Gastrocnemius medialis (tissue), 4 donors: ENCODE measurements at regions of chr6 and their contacts with region 1.

Region 1: GRCh38 chr6:79078075-79079025 is at the start of gene PHIP:
- DNase-seq: peak; percentile 89 to 91
- ATAC-seq: peak; percentile 78 to 82
- H3K4me3 ChIP-seq: peak within 1 kb of the TSS; percentile 86 to 98 (median 92)
- H3K27ac ChIP-seq: peak within 1 kb of the TSS; percentile 99
- H3K4me1 ChIP-seq: peaks cover 40 to 46% of the 10 kb centered on the region in 2 donors
- H3K27me3 ChIP-seq: no peaks in the 10 kb centered on the region
- CTCF ChIP-seq: peak in 1 of 5 experiments; percentile 33
- POLR2A ChIP-seq: peak; percentile 69 to 75
- total RNA-seq, gene PHIP: 10.9 to 25.1 (median 16.6) TPM

Region 2: DNA sequence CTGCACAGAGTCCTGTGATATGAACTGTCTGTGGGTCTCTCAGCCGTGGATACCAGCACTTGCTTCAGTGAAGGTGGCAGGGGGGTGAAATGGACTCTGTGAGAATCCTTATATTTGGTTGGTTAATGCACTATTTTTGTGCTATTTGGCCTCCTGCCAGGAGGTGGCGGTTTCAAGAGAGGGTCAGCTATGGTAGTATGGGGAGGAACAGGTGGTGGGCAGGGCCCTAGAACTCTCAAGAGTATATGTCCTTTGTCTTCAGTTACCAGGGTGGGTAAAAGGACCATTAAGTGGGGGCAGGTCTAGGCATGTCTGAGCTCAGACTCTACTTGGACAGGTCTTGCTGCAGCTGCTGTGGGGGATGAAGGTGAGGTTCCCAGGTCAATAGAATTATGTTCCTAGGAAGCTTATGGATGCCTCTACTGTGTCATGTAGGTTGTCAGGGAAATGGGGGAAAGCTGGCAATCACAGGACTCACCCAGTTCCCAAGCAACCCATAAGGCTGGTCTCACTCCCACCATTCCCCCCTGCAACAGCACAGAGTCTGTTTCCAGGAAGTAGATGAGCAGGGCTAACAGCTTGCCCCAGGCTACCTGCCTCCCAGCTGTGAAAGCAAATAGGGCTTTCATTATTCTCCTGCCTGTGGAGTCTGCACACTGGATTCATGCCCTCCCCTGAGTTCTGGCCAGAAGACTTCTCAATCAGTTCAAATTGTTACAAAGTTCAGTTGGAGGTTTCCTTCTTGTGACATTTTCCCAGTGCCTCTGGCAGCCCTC is 56.5 kb after region 1 on chr6:
- in situ Hi-C with region 1: no loop called
- intact Hi-C with region 1: no loop called
- DNase-seq: no peak
- ATAC-seq: no peak
- H3K4me3 ChIP-seq: no peak overlapping the region
- H3K27ac ChIP-seq: no peak overlapping the region
- H3K4me1 ChIP-seq: no peaks in the 10 kb centered on the region
- H3K27me3 ChIP-seq: no peaks in the 10 kb centered on the region
- CTCF ChIP-seq: no peak
- POLR2A ChIP-seq: no peak

Region 3: DNA sequence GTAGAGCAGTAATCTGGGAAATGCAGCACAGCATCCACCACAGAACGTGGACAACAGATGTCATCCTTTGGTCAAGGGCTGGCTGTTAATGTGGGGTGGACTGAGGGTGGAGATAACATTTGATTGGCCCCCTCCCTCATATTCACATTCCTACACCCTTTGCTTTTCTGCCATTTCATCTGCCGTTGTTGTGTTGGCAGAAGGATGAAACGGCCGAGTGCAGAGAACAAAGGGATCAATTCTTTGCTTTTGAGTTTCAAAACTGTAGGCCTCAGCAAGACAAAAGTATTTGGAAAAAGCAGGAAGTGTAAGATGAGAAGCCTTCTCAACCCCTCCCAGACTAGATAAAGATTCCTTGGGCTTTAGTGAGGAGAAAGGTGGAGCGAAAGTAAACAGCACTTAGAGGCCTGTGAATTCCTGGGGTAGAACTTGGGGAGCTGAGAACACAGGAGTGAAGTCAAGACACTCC is 74.0 kb after region 1 on chr6:
- in situ Hi-C with region 1: no loop called
- intact Hi-C with region 1: loop called (anchors 5 kb)
- DNase-seq: no peak
- ATAC-seq: no peak
- H3K4me3 ChIP-seq: no peak overlapping the region
- H3K27ac ChIP-seq: no peak overlapping the region
- H3K4me1 ChIP-seq: peaks cover 3 to 7% of the 10 kb centered on the region in 2 donors
- H3K27me3 ChIP-seq: no peaks in the 10 kb centered on the region
- CTCF ChIP-seq: no peak
- POLR2A ChIP-seq: no peak

Region 4: GRCh38 chr6:79225716-79226599 is 147.6 kb after region 1 on chr6:
- in situ Hi-C with region 1: loop called in 3 of 4 experiments (anchors 10 to 25 kb)
- intact Hi-C with region 1: no loop called
- DNase-seq: no peak
- ATAC-seq: no peak
- H3K4me3 ChIP-seq: no peak overlapping the region
- H3K27ac ChIP-seq: no peak overlapping the region
- H3K4me1 ChIP-seq: peaks cover 16 to 23% of the 10 kb centered on the region in 2 donors
- H3K27me3 ChIP-seq: no peaks in the 10 kb centered on the region
- CTCF ChIP-seq: no peak
- POLR2A ChIP-seq: no peak

Region 5: DNA sequence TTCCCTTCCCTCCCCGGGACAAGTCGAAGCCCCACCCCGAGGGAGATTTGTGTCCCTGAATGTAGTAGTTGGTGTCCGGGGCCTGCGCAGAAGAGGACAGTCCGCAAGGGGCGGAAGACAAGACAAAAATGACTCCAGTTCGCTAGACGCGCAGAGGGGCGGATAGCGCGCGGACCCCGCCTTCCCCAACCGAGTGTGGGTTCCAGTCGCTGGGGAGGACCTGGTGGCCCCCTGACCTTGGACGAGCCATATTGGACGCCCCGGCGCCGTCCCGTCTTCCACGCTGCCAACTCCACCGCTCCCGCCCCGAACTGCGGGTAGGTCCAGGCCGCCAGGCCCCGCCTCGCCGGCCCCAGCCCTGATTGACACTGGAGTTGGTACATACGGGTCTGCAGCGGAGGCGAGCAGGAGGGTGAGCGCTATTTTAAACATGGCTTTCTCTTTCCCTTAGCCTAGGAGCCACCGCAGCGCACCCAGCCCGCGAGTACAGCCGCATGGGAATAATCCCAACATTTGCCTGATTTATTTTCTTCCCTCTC is 155.3 kb after region 1 on chr6:
- in situ Hi-C with region 1: loop called in 3 of 4 experiments (anchors 10 to 25 kb)
- intact Hi-C with region 1: loop called (anchors 1 kb)
- DNase-seq: peak; percentile 81 to 92
- ATAC-seq: peak; percentile 87 to 90
- H3K4me3 ChIP-seq: peak overlapping the region; percentile 72 to 91 (median 79)
- H3K27ac ChIP-seq: peak overlapping the region; percentile 91 to 96 (median 92)
- H3K4me1 ChIP-seq: peaks cover 13 to 21% of the 10 kb centered on the region in 2 donors
- H3K27me3 ChIP-seq: no peaks in the 10 kb centered on the region
- CTCF ChIP-seq: peak; percentile 31 to 66 (median 53)
- POLR2A ChIP-seq: peak; percentile 71 to 73

Region 6: DNA sequence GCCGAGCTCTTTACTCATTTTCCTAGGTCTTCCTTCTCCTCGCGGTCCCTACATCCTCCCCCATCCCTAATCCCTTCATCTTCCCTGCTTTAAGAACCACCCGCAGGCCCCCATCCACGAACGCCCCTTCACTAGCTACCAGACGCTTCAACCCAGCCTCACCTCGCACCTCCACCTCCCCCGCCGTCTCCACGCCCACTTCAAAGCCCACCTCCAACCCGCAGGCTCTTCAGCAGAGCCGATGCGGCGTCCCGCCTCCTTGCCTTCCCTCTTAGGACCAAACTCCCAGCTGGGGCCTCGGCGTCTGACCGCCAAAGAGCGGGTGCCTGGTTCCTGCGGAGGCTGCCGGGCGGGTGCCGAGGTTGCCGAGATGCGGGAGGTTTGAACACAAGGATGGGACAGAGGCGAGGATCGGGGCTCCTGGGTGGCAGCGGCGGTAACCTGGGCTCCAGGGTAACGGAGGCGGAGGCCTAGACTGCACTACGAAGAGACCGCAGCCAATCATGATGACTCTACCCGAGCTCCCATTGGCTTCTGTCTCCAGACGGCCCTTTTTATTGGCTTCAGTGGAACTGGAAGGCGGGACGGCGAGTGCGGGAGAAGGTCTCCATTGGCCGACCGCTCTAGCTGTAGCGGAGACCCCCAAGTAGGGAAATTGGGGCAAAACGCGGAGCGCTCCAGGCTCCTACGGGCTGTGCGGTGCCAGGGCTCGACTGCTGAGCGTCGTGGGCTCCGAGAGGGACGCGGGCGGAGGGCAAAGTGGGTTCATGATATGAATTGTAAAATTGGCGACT is 458.8 kb after region 1 on chr6 and contains the start of gene LCA5:
- in situ Hi-C with region 1: loop called in 1 of 4 experiments (anchors 25 kb)
- intact Hi-C with region 1: loop called (anchors 2 kb)
- DNase-seq: peak; percentile 94 to 95
- ATAC-seq: peak; percentile 99
- H3K4me3 ChIP-seq: peak within 1 kb of the TSS; percentile 76 to 99 (median 91)
- H3K27ac ChIP-seq: peak within 1 kb of the TSS; percentile 85 to 93 (median 88)
- H3K4me1 ChIP-seq: peaks cover 3 to 19% of the 10 kb centered on the region in 2 donors
- H3K27me3 ChIP-seq: no peaks in the 10 kb centered on the region
- CTCF ChIP-seq: no peak
- POLR2A ChIP-seq: peak in 1 of 2 donors; percentile 63
- total RNA-seq, gene LCA5: 0.92 to 3.0 (median 1.2) TPM